Endothelial cell of umbilical vein (primary cell): ENCODE measurements at regions of chr2 and their contacts with region 1.

Region 1: GRCh38 chr2:179239195-179239594 is 25.4 kb downstream of the SESTD1 start:
- DNase-seq: peak; percentile 39
- H3K4me3 ChIP-seq: no peak overlapping the region
- H3K27ac ChIP-seq: no peak overlapping the region
- H3K4me1 ChIP-seq: peaks cover 23% of the 10 kb centered on the region
- H3K27me3 ChIP-seq: no peaks in the 10 kb centered on the region
- CTCF ChIP-seq: no peak
- POLR2A ChIP-seq: no peak

Region 2: GRCh38 chr2:179264368-179265081 is 25.3 kb after region 1 on chr2 and contains the start of gene SESTD1:
- CTCF ChIA-PET with region 1: interaction called, 4 read pairs
- POLR2A ChIA-PET with region 1: no interaction called
- dilution Hi-C with region 1: no loop called
- intact Hi-C with region 1: loop called (anchors 2 kb)
- DNase-seq: peak; percentile 56
- H3K4me3 ChIP-seq: peak within 1 kb of the TSS; percentile 68 to 85 (median 76)
- H3K27ac ChIP-seq: peak within 1 kb of the TSS; percentile 31
- H3K4me1 ChIP-seq: peaks cover 22% of the 10 kb centered on the region
- H3K27me3 ChIP-seq: no peaks in the 10 kb centered on the region
- CTCF ChIP-seq: no peak
- POLR2A ChIP-seq: peak; percentile 40
- total RNA-seq, gene SESTD1: 72.4 and 79.9 TPM in 2 replicates

Region 3: DNA sequence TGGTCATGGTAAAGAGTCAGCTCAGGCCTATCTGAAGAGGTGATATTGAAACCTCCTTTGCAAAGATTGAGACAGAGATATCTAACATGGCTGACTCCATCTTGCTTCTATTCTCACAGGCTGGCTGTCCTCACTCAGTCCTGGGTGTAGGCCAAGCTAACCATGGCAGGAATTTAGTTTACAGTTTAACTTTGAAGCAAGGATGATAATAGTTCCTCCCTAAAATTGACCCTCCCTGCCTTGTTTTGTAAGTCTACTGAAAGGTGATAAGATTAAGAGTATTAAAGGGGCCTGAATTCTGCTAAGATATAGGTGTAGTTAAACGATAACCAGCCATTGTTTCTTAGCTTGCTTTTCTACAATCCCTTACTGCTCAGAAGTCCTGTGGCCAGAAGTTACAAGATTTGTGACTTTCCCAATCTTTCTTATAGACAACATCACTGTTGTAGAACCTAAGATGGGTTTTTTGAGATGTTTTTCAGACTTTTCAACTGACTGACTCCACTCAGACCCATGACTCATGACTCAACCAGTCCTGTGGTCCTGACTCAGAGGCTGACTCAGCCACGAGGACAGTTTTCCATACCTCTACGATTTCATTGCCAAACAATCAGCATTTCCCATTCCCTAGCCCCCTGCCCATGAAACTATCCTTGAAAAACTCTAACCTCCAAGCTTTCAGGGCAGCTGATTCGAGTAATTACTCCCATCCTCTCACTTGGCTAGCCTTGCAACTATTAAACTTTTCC is 221.2 kb after region 1 on chr2:
- CTCF ChIA-PET with region 1: no interaction called
- POLR2A ChIA-PET with region 1: no interaction called
- dilution Hi-C with region 1: no loop called
- intact Hi-C with region 1: loop called (anchors 10 kb)
- DNase-seq: peak; percentile 69
- H3K4me3 ChIP-seq: no peak overlapping the region
- H3K27ac ChIP-seq: peak overlapping the region; percentile 38
- H3K4me1 ChIP-seq: peaks cover 7% of the 10 kb centered on the region
- H3K27me3 ChIP-seq: no peaks in the 10 kb centered on the region
- CTCF ChIP-seq: no peak
- POLR2A ChIP-seq: no peak